ENCODE measurements at regions of chr6 and their contacts with region 1.

Region 1: GRCh38 chr6:1335367-1336037 is 23.6 kb downstream of the FOXQ1 start:
- DNase-seq: peak; percentile 88 to 97
- H3K4me3 ChIP-seq: peak overlapping the region; percentile 48
- H3K27ac ChIP-seq: peak overlapping the region; percentile 98
- H3K4me1 ChIP-seq: peaks cover 63% of the 10 kb centered on the region
- H3K27me3 ChIP-seq: no peaks in the 10 kb centered on the region
- CTCF ChIP-seq: no peak

Region 2: GRCh38 chr6:593139-593906 is 742.2 kb before region 1 on chr6:
- CTCF ChIA-PET with region 1: interaction called, 3 read pairs
- POLR2A ChIA-PET with region 1: no interaction called
- intact Hi-C with region 1: loop called (anchors 1 kb)
- DNase-seq: peak; percentile 31 to 48
- H3K4me3 ChIP-seq: no peak overlapping the region
- H3K27ac ChIP-seq: no peak overlapping the region
- H3K4me1 ChIP-seq: no peaks in the 10 kb centered on the region
- H3K27me3 ChIP-seq: no peaks in the 10 kb centered on the region
- CTCF ChIP-seq: peak; percentile 68

Region 3: DNA sequence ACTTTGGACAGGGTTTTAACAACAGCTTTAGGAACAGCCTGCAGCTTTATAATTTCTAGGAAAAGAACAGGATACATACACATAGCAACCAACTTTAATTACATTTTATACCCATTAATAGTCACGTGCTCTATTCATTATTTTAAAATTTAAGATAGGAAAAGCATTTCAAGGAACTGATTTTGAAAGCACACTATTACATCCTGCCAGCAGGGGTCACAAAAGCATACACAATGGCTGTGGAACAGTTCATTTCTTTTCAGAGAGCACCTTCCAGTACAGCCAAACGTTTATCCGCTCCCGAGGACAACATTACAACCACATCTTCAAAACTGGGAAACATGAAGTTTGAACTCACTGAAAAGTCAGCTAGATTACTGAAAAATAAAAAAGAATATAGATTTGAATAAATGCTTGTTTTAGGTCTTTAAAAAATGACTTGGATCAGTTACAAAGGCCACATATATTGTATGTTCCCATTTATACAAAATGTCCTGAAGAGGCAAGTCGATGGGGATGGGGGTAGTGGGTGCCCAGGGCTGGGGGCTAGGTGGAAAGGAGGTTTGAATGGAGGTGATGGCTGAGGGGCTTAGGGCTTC is 537.9 kb before region 1 on chr6:
- CTCF ChIA-PET with region 1: no interaction called
- POLR2A ChIA-PET with region 1: no interaction called
- intact Hi-C with region 1: loop called (anchors 1 kb)
- DNase-seq: peak in 1 of 2 experiments; percentile 35
- H3K4me3 ChIP-seq: no peak overlapping the region
- H3K27ac ChIP-seq: no peak overlapping the region
- H3K4me1 ChIP-seq: no peaks in the 10 kb centered on the region
- H3K27me3 ChIP-seq: no peaks in the 10 kb centered on the region
- CTCF ChIP-seq: peak; percentile 84

Region 4: DNA sequence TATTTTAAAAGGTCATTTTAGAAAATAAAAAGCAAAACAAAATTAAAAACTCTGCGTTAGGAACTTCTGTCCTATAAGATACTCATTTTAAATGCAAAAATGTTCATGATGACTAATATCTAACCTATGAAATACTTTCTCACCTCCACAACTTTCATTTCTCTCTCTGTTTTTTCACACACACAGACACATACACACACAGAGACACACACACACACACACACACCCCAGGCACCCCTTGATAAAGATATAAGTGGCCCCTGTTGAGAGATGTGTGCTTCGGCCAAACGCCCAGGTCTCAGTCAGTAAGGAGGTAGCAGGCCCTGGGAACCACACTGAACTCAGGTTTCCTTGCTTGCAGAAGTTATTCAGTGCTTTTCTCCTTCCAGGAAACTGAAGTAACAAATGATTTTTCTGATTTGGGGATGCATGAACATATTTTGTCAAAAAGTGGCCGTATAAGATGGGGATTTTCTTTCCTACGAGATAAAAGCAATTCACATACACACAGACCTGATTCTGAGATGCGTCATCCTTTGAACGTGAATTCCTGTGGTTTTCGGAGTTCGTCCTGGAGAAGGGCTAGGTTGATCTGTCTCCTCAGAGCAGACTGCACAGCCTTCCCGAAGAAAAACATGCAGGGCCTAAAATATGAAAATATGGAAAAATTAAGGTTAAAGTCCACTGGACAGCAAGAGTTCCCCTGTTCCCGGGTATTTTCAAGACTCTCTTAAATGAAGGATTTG is 330.4 kb before region 1 on chr6:
- CTCF ChIA-PET with region 1: no interaction called
- POLR2A ChIA-PET with region 1: no interaction called
- intact Hi-C with region 1: loop called (anchors 5 kb)
- DNase-seq: peak; percentile 39 to 74
- H3K4me3 ChIP-seq: no peak overlapping the region; the same call in 1 of the 2 replicates
- H3K27ac ChIP-seq: no peak overlapping the region
- H3K4me1 ChIP-seq: peaks cover 14% of the 10 kb centered on the region
- H3K27me3 ChIP-seq: no peaks in the 10 kb centered on the region
- CTCF ChIP-seq: no peak

Region 5: GRCh38 chr6:1208876-1209275 is 126.6 kb before region 1 on chr6:
- CTCF ChIA-PET with region 1: no interaction called
- POLR2A ChIA-PET with region 1: no interaction called
- intact Hi-C with region 1: loop called (anchors 5 kb)
- DNase-seq: peak; percentile 30 to 79
- H3K4me3 ChIP-seq: no peak overlapping the region
- H3K27ac ChIP-seq: peak overlapping the region; percentile 44; the same call in 1 of the 2 replicates
- H3K4me1 ChIP-seq: peaks cover 13% of the 10 kb centered on the region
- H3K27me3 ChIP-seq: no peaks in the 10 kb centered on the region
- CTCF ChIP-seq: no peak

Region 6: DNA sequence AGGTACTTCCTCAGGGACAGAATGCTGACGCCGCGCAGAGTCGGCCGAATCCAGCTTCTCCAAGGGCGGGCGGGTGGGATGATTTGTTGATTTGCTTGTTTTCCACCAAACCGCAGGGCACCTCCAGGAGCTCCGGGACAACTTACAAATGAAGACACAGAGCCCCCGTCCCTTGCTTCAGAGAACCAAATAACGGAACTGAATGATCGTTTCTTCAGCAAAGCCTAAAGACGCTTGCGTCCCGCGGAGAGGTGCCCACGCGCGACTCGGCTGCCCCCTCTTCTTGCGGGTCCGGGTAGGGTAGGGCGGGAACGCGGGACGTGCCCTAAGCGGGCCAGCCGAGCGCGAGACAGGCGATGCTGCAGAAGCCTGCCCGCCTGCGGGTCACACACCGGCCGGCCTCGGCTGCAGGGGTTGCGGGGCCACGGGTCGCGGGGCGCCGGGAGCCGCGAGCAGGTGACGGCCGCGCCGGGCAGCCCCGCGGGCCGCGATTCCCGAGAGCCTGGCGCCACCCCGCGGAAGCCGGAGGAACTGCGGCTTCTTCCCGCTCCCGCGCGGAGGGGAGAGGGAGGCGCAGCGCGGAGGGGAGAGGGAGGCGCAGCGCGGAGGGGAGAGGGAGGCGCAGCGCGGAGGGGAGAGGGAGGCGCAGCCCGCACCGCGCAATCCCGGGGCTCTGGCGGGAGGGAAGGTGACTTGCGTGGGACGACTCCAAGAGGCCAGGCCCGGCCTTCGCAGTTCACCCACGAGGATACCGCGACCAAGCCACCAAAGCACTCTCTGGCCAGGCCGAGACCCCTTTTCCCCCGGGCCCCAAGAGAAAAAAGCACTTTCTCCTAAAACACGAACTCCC is 46.2 kb after region 1 on chr6:
- CTCF ChIA-PET with region 1: no interaction called
- POLR2A ChIA-PET with region 1: interaction called, 3 read pairs
- intact Hi-C with region 1: loop called (anchors 2 kb)
- DNase-seq: peak in 1 of 2 experiments; percentile 73
- H3K4me3 ChIP-seq: peak overlapping the region; percentile 49; the same call in 1 of the 2 replicates
- H3K27ac ChIP-seq: no peak overlapping the region
- H3K4me1 ChIP-seq: no peaks in the 10 kb centered on the region
- H3K27me3 ChIP-seq: no peaks in the 10 kb centered on the region
- CTCF ChIP-seq: peak; percentile 67